Activated naive CD4-positive, alpha-beta T cell treated with anti-CD3 and anti-CD28 coated beads, Interleukin-2, amount 10 ng/mL, durations not matched to agents 7 days and 5 days (primary cell): ENCODE measurements at regions of chr1 and their contacts with region 1.

Region 1: GRCh38 chr1:201481761-201482493 is 12.9 kb upstream of the PHLDA3 start:
- DNase-seq: peak; percentile 88
- H3K4me3 Mint-ChIP-seq: peak overlapping the region; percentile 62
- H3K27ac Mint-ChIP-seq: no peak overlapping the region
- H3K4me1 Mint-ChIP-seq: peaks cover 43% of the 10 kb centered on the region
- H3K27me3 Mint-ChIP-seq: peaks cover 39% of the 10 kb centered on the region

Region 2: DNA sequence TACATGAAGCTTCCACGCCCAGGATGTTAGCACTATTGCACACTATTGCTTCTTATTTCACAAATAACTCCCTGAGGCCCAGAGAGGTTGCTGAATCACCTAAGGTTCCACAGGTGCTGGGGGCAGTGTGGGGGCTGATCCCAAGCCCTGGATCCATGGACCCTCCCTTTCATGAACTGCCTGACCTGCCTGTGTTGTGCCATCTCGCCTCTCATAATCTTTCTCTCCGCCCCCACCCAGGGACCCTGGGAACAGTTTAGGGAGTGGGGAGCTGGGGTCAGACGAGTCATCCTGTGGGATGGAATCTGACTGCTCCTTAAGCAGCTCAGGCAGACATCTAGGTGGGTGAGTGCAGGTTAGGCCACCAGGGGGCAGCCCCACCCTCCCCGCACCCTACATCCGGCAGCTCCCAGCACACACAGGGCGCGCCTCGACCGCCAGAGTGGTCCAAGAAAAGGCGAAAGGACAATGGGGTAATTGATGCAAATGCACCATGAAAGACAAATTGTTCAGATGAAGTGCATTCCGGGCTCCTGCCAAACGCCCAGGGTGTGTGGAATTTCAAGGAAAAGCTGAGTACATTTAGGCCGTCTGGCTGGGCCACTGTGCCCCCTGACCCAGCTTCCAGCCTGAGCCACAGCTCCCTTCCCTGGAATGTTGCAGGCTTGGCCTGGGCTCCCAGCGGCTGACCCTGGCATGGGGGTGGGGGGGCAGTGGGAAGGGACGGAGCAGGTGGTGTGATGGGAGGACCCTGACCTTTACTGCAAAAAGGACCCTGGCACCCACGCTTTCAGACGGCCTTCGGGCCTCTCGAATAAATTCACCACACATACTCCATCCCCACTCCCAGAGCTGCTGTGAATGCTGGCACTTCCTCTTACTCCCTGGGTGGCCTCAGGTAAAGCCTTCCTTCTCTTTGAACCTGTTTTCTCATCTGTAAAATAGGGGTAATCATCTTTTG is 33.7 kb before region 1 on chr1:
- CTCF ChIA-PET with region 1: interaction called, 156 read pairs
- DNase-seq: peak; percentile 81
- H3K4me3 Mint-ChIP-seq: no peak overlapping the region
- H3K27ac Mint-ChIP-seq: no peak overlapping the region
- H3K4me1 Mint-ChIP-seq: peaks cover 25% of the 10 kb centered on the region
- H3K27me3 Mint-ChIP-seq: peaks cover 63% of the 10 kb centered on the region

Region 3: DNA sequence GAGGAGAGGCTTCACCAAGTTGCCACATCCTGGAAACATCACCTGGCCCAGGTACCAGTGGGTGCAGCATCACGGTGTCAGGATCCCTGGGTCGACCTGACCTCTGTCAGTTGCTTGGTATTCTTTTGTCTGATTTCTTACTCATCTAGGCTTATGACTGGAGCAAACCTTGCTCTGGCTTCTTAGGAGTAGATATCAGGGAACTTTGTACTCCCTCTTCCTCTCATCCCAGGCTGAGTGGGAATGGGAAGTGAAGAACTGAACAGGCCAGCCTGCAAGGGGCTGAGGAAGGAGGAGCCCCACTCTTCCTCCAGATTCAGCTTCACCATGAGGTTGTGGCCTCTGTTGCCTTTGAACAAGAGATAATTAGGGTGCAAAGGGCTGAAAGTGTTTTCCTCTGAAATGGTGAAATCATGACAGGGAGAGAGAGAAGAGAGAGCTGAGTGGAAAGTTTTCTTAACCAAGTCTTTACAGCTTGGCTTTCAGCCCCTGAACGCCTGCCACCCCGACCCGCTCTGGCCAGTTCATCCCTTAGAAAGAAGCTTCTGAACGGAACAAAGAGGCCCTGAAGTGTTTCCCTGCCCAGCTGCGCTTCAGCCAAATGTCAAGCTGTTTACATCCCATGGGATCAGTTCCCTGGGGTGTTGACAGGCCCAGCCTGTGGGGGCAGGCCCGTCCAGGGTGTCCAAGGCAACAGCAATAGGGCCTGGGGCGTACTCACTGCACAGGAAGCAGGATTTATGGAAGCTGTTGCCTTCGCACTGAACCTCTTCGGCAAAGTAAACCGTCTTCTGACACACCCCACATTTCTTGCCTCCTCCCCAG is 13.8 kb after region 1 on chr1:
- CTCF ChIA-PET with region 1: interaction called, 103 read pairs
- DNase-seq: no peak
- H3K4me3 Mint-ChIP-seq: no peak overlapping the region
- H3K27ac Mint-ChIP-seq: no peak overlapping the region
- H3K4me1 Mint-ChIP-seq: peaks cover 2% of the 10 kb centered on the region
- H3K27me3 Mint-ChIP-seq: no peaks in the 10 kb centered on the region

Region 4: DNA sequence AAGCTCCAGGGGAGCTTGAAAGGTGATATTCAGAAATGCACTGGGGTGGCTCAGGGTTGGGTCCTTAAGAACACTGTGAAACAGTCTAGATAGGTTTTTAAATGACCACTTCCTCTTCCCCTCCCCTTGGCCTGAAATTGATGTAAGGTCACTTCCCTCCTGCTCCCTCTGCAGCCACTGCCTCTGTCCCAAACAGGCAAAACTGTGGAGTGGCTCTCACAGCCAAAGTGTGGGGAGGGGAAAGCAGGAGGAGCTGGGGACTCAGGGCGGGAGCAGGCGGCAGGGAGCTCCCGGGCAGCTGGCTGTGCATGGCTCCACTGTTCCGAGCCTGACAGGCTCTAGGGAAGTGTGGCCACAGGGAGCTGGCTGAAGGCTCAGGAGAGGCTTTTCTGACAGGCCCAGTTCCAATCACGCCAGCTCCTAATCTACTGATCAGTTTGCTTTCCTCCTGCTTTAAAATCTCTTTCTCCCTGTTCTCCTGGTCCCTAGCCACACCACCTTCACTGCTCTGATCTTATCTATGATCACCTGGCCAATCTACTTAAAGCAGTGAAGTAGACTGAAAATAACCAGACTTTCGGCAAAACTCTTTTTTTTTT is 30.1 kb after region 1 on chr1:
- CTCF ChIA-PET with region 1: interaction called, 349 read pairs
- DNase-seq: no peak
- H3K4me3 Mint-ChIP-seq: no peak overlapping the region
- H3K27ac Mint-ChIP-seq: no peak overlapping the region
- H3K4me1 Mint-ChIP-seq: peaks cover 33% of the 10 kb centered on the region
- H3K27me3 Mint-ChIP-seq: no peaks in the 10 kb centered on the region

Region 5: DNA sequence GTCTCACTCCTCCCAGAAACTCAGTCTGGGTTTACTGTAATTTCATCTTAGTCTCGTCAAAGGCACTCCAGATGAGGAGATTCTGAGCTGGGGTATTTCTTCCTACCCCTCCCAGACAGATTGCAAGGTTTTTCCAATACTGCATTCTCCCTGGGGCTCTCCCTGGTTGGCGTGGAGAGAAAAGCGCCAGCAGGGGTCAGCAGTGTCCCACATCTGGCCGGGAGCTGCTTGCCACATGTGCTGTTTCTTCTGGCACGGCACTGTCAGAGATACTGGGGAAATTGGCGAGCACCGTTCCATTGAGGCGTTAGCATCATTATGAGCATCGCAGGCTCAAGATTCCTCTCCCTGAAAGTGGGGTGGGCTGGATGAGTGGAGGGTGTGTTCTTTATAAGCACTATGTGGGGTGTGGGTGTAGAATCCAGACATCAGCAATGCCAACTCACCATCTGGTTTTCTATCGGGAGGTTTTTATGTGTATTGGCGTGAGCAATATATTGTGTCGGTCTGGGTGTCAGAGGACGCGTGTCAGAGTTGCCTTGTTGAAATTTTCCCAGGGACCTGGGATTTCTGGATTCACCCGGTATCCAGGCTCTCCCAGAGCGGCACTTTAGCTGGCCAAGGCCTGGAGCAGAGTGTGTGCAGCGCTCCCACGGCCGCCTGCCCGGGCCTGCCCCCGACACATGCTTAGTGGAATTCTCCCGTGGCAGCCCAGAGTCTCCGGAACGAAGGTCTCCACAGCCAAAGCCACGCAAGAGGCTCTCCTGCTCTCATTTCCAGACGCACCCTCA is 49.0 kb after region 1 on chr1:
- CTCF ChIA-PET with region 1: no interaction called
- DNase-seq: peak; percentile 59
- H3K4me3 Mint-ChIP-seq: no peak overlapping the region
- H3K27ac Mint-ChIP-seq: no peak overlapping the region
- H3K4me1 Mint-ChIP-seq: peaks cover 3% of the 10 kb centered on the region
- H3K27me3 Mint-ChIP-seq: peaks cover 5% of the 10 kb centered on the region

Region 6: DNA sequence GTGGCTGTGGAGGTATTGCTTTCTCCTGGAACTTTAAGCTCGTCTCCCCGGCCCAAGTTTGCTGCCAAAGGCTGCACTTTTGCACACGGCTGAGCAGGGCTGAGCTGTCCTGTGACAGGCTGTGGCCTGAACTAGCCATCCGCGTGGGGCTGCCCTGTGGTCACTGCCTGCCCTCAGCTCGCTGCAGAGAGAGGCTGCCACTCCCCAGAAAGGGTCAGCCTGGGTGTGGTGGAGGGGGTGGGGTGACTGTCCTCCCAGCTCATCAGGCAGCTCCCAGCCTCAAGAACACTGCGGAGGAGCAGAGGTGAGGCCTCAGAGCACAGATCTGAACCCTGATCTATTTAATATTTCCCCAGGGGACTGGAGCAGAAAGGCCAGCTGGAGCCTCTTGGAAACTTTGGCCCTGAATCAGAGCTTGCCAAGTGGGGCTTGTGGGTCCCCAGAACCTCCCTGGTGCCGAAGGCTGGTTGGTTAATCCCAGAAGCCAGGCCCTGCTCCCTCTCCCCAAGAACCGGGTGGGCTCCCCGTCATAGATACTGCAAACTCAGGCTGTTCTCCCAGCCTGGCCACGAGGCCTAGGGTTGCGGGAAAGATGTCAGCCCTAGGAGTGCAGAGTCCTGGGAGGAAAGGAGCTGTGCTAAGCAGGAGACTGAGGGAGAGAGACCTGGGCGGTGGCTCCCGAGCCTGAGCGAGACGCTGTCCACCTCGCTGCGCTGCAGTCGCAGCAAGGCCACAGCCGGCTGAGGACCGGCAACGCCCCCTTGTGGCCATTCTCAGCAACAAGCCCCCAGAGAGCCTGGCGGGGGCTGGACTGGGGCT is 221.9 kb after region 1 on chr1:
- CTCF ChIA-PET with region 1: interaction called, 13 read pairs
- DNase-seq: peak; percentile 76
- H3K4me3 Mint-ChIP-seq: no peak overlapping the region
- H3K27ac Mint-ChIP-seq: no peak overlapping the region
- H3K4me1 Mint-ChIP-seq: no peaks in the 10 kb centered on the region
- H3K27me3 Mint-ChIP-seq: peaks cover 27% of the 10 kb centered on the region